Mucosa of descending colon (tissue), 3 donors: ENCODE measurements at regions of chr12 and their contacts with region 1.

Region 1: GRCh38 chr12:2857021-2857431 is at the start of gene TEX52:
- DNase-seq: no peak
- ATAC-seq: no peak
- H3K4me3 ChIP-seq: no peak within 1 kb of the TSS
- H3K4me1 ChIP-seq: peaks cover 18% of the 10 kb centered on the region
- CTCF ChIP-seq: no peak
- total RNA-seq, gene TEX52: not detected

Region 2: GRCh38 chr12:1605129-1606020 is 1251.7 kb before region 1 on chr12:
- intact Hi-C with region 1: no loop called
- DNase-seq: peak; percentile 72 to 91 (median 80)
- ATAC-seq: peak; percentile 82
- H3K4me3 ChIP-seq: no peak overlapping the region
- H3K4me1 ChIP-seq: peaks cover 24% of the 10 kb centered on the region
- CTCF ChIP-seq: peak; percentile 66

Region 3: DNA sequence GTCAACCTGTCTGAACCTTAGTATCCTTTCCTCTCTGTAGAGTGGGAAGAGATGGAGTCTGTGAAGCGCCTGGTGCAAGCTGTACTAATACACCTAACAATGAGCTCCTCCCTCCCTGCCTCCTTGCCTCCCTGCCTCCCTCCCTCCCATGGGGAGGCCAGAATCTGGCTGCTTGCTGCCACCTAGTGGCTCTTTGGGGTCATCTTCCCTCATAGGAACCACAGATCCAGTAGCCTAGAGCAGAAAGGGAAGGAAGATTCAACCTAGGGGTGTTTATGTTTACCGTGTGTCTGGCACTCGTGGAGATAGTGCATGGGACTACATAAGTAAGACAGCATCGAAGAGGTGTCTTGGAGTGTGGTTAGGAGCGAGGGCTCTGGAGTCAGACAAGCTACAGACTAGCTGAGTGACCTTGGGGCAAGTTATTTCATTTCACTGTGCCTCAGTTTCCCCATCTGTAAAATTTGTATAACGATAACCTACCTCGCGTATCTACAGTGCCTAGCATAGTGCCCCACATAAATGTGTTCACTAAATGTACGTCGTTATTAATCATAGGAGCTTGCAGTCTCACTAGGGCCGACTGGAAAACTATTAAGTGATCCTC is 184.6 kb after region 1 on chr12:
- intact Hi-C with region 1: loop called in 1 of 2 experiments (anchors 5 kb)
- DNase-seq: peak in 2 of 3 donors; percentile 60 to 72
- ATAC-seq: peak; percentile 89
- H3K4me3 ChIP-seq: no peak overlapping the region
- H3K4me1 ChIP-seq: no peaks in the 10 kb centered on the region
- CTCF ChIP-seq: peak; percentile 43

Region 4: GRCh38 chr12:3097186-3097804 is 240.3 kb after region 1 on chr12:
- intact Hi-C with region 1: no loop called
- DNase-seq: peak in 2 of 3 donors; percentile 73
- ATAC-seq: peak; percentile 77
- H3K4me3 ChIP-seq: no peak overlapping the region
- H3K4me1 ChIP-seq: peaks cover 4% of the 10 kb centered on the region
- CTCF ChIP-seq: no peak